GM12878 (cell line): ENCODE measurements at regions of chr2 and their contacts with region 1.

Region 1: DNA sequence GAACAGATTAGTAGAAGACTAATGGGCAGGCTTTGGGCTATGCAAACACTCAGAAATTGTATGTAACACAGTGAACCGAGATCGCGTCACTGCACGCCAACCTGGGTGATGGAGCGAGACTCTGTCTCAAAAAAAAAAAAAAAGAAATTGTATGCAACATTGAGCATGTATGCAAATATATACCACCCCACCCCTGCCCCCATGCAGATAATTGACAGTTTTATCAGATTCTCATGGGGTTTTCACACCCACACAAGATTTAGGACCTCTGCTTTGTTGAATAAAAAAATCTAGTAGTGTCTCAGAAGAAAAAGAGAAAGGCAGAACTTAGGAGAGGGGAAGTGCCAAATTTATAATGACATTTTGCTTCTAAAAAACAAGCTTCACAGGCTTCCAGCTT is 131.6 kb upstream of the FN1 start:
- DNase-seq: peak; percentile 38
- ATAC-seq: peak; percentile 98
- H3K4me3 ChIP-seq: no peak overlapping the region
- H3K27ac ChIP-seq: no peak overlapping the region
- H3K4me1 ChIP-seq: no peaks in the 10 kb centered on the region
- H3K27me3 ChIP-seq: no peaks in the 10 kb centered on the region
- CTCF ChIP-seq: no peak
- EP300 ChIP-seq: peak; percentile 66 to 85
- POLR2A ChIP-seq: no peak
- RAD21 ChIP-seq: no peak

Region 2: GRCh38 chr2:215553946-215554345 is 13.6 kb before region 1 on chr2:
- CTCF ChIA-PET with region 1: interaction called, 16 read pairs
- POLR2A ChIA-PET with region 1: interaction called, 4 read pairs
- RAD21 ChIA-PET with region 1: interaction called, 5 read pairs
- SMC1A ChIA-PET with region 1: interaction called, 5 read pairs
- in situ Hi-C with region 1: no loop called
- intact Hi-C with region 1: no loop called
- DNase-seq: no peak
- ATAC-seq: peak; percentile 56; the same call in 2 of the 3 replicates
- H3K4me3 ChIP-seq: no peak overlapping the region
- H3K27ac ChIP-seq: no peak overlapping the region
- H3K4me1 ChIP-seq: no peaks in the 10 kb centered on the region
- H3K27me3 ChIP-seq: no peaks in the 10 kb centered on the region
- CTCF ChIP-seq: peak; percentile 8 to 42 (median 27); a peak in 2 of 6 replicates
- EP300 ChIP-seq: no peak
- POLR2A ChIP-seq: no peak
- RAD21 ChIP-seq: peak; percentile 25; the same call in 1 of the 2 replicates

Region 3: GRCh38 chr2:215579809-215580208 is 12.3 kb after region 1 on chr2:
- CTCF ChIA-PET with region 1: interaction called, 5 read pairs
- POLR2A ChIA-PET with region 1: interaction called, 7 read pairs
- RAD21 ChIA-PET with region 1: interaction called, 5 read pairs
- SMC1A ChIA-PET with region 1: interaction called, 18 read pairs
- in situ Hi-C with region 1: no loop called
- intact Hi-C with region 1: no loop called
- DNase-seq: no peak
- ATAC-seq: no peak
- H3K4me3 ChIP-seq: no peak overlapping the region
- H3K27ac ChIP-seq: no peak overlapping the region
- H3K4me1 ChIP-seq: no peaks in the 10 kb centered on the region
- H3K27me3 ChIP-seq: no peaks in the 10 kb centered on the region; a peak in 1 of 4 replicates
- CTCF ChIP-seq: no peak
- EP300 ChIP-seq: no peak
- POLR2A ChIP-seq: no peak
- RAD21 ChIP-seq: no peak

Region 4: DNA sequence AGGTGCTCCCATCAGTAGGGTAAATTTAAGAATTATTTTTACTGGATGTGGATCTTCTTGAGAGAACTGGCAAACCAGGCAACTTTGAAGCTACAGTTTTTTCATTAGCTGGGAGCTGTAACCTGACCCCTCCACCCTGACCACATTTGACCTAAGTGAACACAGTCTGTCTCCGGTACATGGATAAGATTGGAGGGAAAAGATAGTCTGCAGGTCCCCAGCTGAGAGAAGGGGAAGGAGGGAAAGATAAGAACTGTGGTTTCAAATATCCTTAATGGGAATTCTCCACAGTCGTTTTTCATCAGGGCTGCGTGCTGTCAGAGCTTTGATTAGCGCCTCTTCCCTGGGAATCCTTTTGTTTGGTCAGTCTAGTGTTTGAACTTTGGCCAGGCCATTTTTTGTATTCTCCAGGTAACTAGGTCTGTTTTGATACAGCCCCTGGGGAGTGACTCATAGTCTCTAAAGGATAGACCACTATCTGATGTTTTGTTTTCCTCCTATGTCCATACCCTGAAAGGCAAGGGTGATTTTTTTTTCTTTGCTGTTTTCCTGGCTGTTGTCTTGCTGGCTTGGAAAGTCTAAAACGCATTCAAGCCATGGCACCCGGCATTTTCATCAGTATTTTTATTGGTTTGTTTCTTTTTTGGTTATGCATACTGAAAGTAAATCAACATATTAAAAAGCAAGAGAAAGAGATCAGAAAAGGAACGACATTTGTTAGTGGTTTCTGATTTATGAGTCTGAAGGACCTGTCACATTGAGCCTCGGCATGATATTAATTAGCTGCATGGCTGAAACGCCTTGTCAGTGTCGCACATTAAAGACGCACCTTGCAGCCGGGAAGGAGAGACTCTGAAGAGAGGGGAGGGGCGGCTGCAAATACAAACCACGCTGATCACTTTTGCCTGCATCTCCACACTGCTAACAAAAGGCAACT is 51.8 kb after region 1 on chr2:
- CTCF ChIA-PET with region 1: no interaction called
- POLR2A ChIA-PET with region 1: interaction called, 3 read pairs
- RAD21 ChIA-PET with region 1: no interaction called
- SMC1A ChIA-PET with region 1: interaction called, 16 read pairs
- in situ Hi-C with region 1: no loop called
- intact Hi-C with region 1: no loop called
- DNase-seq: no peak
- ATAC-seq: peak; percentile 88
- H3K4me3 ChIP-seq: no peak overlapping the region
- H3K27ac ChIP-seq: no peak overlapping the region
- H3K4me1 ChIP-seq: no peaks in the 10 kb centered on the region
- H3K27me3 ChIP-seq: no peaks in the 10 kb centered on the region
- CTCF ChIP-seq: no peak
- EP300 ChIP-seq: no peak
- POLR2A ChIP-seq: no peak
- RAD21 ChIP-seq: no peak